Mammary epithelial cell (primary cell): ENCODE measurements at regions of chr9 and their contacts with region 1.

Region 1: GRCh38 chr9:7055201-7055903 is 297.6 kb downstream of the KDM4C start:
- DNase-seq: no peak
- H3K4me3 ChIP-seq: no peak overlapping the region
- H3K27ac ChIP-seq: no peak overlapping the region
- H3K4me1 ChIP-seq: no peaks in the 10 kb centered on the region
- H3K27me3 ChIP-seq: no peaks in the 10 kb centered on the region
- CTCF ChIP-seq: no peak

Region 2: GRCh38 chr9:6907772-6908381 is 147.5 kb before region 1 on chr9:
- CTCF ChIA-PET with region 1: no interaction called
- dilution Hi-C with region 1: no loop called
- in situ Hi-C with region 1: no loop called
- intact Hi-C with region 1: loop called (anchors 5 kb)
- DNase-seq: no peak
- H3K4me3 ChIP-seq: no peak overlapping the region
- H3K27ac ChIP-seq: no peak overlapping the region
- H3K4me1 ChIP-seq: peaks cover 6% of the 10 kb centered on the region
- H3K27me3 ChIP-seq: no peaks in the 10 kb centered on the region
- CTCF ChIP-seq: peak; percentile 61 to 67

Region 3: GRCh38 chr9:7186175-7186574 is 130.8 kb after region 1 on chr9:
- CTCF ChIA-PET with region 1: interaction called, 4 read pairs
- dilution Hi-C with region 1: no loop called
- in situ Hi-C with region 1: no loop called
- intact Hi-C with region 1: loop called (anchors 1 kb)
- DNase-seq: peak; percentile 21
- H3K4me3 ChIP-seq: no peak overlapping the region
- H3K27ac ChIP-seq: no peak overlapping the region
- H3K4me1 ChIP-seq: peaks cover 13% of the 10 kb centered on the region
- H3K27me3 ChIP-seq: no peaks in the 10 kb centered on the region
- CTCF ChIP-seq: peak; percentile 59 to 70

Region 4: GRCh38 chr9:7234143-7234542 is 178.8 kb after region 1 on chr9:
- CTCF ChIA-PET with region 1: interaction called, 45 read pairs
- dilution Hi-C with region 1: no loop called
- in situ Hi-C with region 1: no loop called
- intact Hi-C with region 1: loop called (anchors 1 kb)
- DNase-seq: peak; percentile 35
- H3K4me3 ChIP-seq: no peak overlapping the region
- H3K27ac ChIP-seq: no peak overlapping the region
- H3K4me1 ChIP-seq: no peaks in the 10 kb centered on the region
- H3K27me3 ChIP-seq: no peaks in the 10 kb centered on the region
- CTCF ChIP-seq: peak; percentile 40 to 43

Region 5: GRCh38 chr9:7402334-7403027 is 347.1 kb after region 1 on chr9:
- CTCF ChIA-PET with region 1: interaction called, 18 read pairs
- dilution Hi-C with region 1: no loop called
- in situ Hi-C with region 1: no loop called
- intact Hi-C with region 1: loop called (anchors 5 kb)
- DNase-seq: peak; percentile 8
- H3K4me3 ChIP-seq: no peak overlapping the region
- H3K27ac ChIP-seq: no peak overlapping the region
- H3K4me1 ChIP-seq: peaks cover 9% of the 10 kb centered on the region
- H3K27me3 ChIP-seq: no peaks in the 10 kb centered on the region
- CTCF ChIP-seq: no peak

Region 6: DNA sequence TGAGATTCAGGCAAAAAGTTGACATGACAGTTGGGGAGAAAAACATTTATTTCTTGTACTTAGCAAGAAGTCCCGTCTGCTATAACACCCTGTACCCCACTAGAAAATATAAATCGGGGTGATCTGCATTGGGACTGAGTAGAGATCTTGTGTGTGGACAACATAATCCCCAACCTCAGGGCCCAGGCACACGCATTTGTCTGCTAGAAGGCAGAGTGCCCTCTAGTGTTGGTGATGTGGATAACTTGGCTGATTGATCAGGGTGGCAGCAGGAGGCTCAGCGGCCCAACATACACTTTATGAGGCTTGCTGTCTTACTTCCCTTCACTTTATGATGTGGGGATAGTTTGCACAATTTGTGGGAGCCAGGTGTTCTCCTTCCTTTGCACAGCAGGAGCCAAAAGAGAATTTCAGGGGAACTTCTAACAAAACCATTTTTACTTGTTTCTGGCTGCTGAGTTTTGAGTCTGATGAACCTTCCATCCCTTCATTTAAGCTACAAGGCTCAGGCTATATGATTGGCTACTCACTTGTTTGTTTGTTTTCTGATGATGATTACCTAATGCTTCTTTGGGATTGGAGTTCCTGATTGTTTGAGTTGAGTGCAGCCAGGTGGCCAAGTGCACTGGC is 481.1 kb after region 1 on chr9:
- CTCF ChIA-PET with region 1: no interaction called
- dilution Hi-C with region 1: no loop called
- in situ Hi-C with region 1: loop called (anchors 25 kb)
- intact Hi-C with region 1: no loop called
- DNase-seq: peak; percentile 27
- H3K4me3 ChIP-seq: no peak overlapping the region
- H3K27ac ChIP-seq: no peak overlapping the region
- H3K4me1 ChIP-seq: no peaks in the 10 kb centered on the region
- H3K27me3 ChIP-seq: peaks cover 3% of the 10 kb centered on the region
- CTCF ChIP-seq: peak; percentile 86 to 88